ACHN (cell line): ENCODE measurements at regions of chr2 and their contacts with region 1.

Region 1: DNA sequence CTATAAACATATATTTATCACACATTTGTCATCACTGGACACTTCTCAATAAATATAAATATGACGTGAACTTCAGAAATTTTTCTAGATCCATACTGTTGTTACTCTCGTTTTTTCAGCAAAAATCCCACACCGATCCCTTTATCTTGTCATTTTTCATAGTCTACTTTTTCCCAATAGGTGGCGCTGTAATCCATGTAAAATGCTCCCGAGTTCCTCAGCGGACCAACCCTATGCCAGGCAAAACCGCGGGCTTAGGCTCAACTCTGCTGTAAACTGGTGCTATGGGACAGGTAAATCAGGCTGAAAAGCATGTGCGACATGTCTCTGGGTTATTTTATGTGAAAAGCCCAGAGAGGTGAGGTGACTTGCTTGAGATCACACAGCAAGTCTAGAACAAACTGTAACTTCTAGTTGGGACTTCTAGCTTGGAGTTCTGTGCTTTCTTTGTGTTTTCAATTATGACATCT is 104.0 kb downstream of the COBLL1 start:
- DNase-seq: peak; percentile 87

Region 2: GRCh38 chr2:164917296-164917903 is 179.8 kb after region 1 on chr2:
- in situ Hi-C with region 1: loop called (anchors 25 kb)
- DNase-seq: peak; percentile 69

Region 3: GRCh38 chr2:164954186-164954585 is 216.5 kb after region 1 on chr2:
- in situ Hi-C with region 1: no loop called
- DNase-seq: no peak